Naive thymus-derived CD4-positive, alpha-beta T cell (primary cell): ENCODE measurements at regions of chr3 and their contacts with region 1.

Region 1: GRCh38 chr3:18679238-18679637 is 254.1 kb upstream of the SATB1 start:
- DNase-seq: peak in 8 of 9 donors; percentile 26 to 65 (median 42)
- ATAC-seq: peak; percentile 91
- H3K4me3 ChIP-seq: no peak overlapping the region
- H3K4me3 Mint-ChIP-seq: peak overlapping the region; percentile 30 to 79 (median 72)
- H3K27ac ChIP-seq: peak overlapping the region; percentile 35
- H3K27ac Mint-ChIP-seq: peak overlapping the region; percentile 53 to 90 (median 80)
- H3K4me1 ChIP-seq: peaks cover 34 to 46% of the 10 kb centered on the region in 2 donors
- H3K4me1 Mint-ChIP-seq: peaks cover 37 to 83% (median 75%) of the 10 kb centered on the region in 7 donors
- H3K27me3 ChIP-seq: no peaks in the 10 kb centered on the region
- H3K27me3 Mint-ChIP-seq: no peaks in the 10 kb centered on the region

Region 2: GRCh38 chr3:18643281-18643680 is 36.0 kb before region 1 on chr3:
- CTCF ChIA-PET with region 1: no interaction called
- POLR2A ChIA-PET with region 1: interaction called, 3 read pairs
- intact Hi-C with region 1: loop called in 1 of 2 experiments (anchors 2 kb)
- DNase-seq: peak in 4 of 9 donors; percentile 10 to 29 (median 14)
- ATAC-seq: no peak
- H3K4me3 ChIP-seq: no peak overlapping the region
- H3K4me3 Mint-ChIP-seq: peak overlapping the region in 9 of 10 donors; percentile 43 to 71 (median 58)
- H3K27ac ChIP-seq: no peak overlapping the region
- H3K27ac Mint-ChIP-seq: peak overlapping the region; percentile 45 to 90 (median 65)
- H3K4me1 ChIP-seq: peaks cover 18 to 24% of the 10 kb centered on the region in 2 donors
- H3K4me1 Mint-ChIP-seq: peaks cover 31 to 65% (median 50%) of the 10 kb centered on the region in 7 donors
- H3K27me3 ChIP-seq: no peaks in the 10 kb centered on the region
- H3K27me3 Mint-ChIP-seq: no peaks in the 10 kb centered on the region

Region 3: DNA sequence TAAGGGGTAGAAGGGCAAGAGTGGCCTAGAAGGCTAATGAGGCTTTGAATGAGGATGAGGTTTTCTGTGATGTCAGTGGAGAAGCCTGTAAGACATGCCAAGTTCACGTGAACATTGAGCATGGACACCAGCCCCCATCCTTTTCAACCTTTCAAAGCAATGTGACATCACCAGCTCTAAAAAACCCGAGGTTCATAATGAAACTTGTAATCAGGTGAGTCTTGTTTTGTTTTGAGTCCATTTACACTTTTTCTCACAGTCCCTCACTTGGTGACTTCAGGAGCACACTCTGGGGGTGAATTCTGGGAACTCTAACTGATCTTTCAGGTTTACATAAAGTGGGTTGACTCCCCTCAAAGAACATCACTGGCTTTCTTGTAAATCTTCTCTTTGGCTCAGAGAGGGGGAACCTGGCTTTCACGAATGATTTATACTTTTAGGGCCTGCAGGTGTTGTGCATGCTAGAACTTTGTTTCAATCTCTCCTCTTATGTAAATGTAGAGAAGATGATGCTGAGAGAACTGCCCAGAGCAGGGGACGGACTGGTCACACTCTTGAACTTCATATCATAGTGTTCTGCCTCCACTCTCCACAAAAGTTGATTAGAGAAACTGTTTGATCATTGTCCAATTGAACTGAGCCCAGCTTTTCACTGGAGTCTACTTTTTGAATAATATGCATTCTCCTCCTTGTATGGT is 29.4 kb before region 1 on chr3:
- CTCF ChIA-PET with region 1: no interaction called
- POLR2A ChIA-PET with region 1: no interaction called
- intact Hi-C with region 1: loop called in 1 of 2 experiments (anchors 1 kb)
- DNase-seq: peak in 8 of 9 donors; percentile 21 to 53 (median 33)
- ATAC-seq: peak; percentile 41
- H3K4me3 ChIP-seq: no peak overlapping the region
- H3K4me3 Mint-ChIP-seq: peak overlapping the region in 8 of 10 donors; percentile 14 to 66 (median 28)
- H3K27ac ChIP-seq: no peak overlapping the region
- H3K27ac Mint-ChIP-seq: peak overlapping the region; percentile 17 to 89 (median 56)
- H3K4me1 ChIP-seq: peaks cover 0 to 12% of the 10 kb centered on the region in 2 donors
- H3K4me1 Mint-ChIP-seq: peaks cover 22 to 77% (median 30%) of the 10 kb centered on the region in 7 donors
- H3K27me3 ChIP-seq: no peaks in the 10 kb centered on the region
- H3K27me3 Mint-ChIP-seq: no peaks in the 10 kb centered on the region

Region 4: GRCh38 chr3:18717598-18717997 is 38.4 kb after region 1 on chr3:
- CTCF ChIA-PET with region 1: interaction called, 4 read pairs
- POLR2A ChIA-PET with region 1: interaction called, 3 read pairs
- intact Hi-C with region 1: loop called (anchors 1 to 10 kb)
- DNase-seq: peak in 1 of 9 donors; percentile 14
- ATAC-seq: no peak
- H3K4me3 ChIP-seq: no peak overlapping the region
- H3K4me3 Mint-ChIP-seq: peak overlapping the region in 8 of 10 donors; percentile 28 to 78 (median 60)
- H3K27ac ChIP-seq: no peak overlapping the region
- H3K27ac Mint-ChIP-seq: peak overlapping the region; percentile 20 to 95 (median 77)
- H3K4me1 ChIP-seq: peaks cover 43 to 50% of the 10 kb centered on the region in 2 donors
- H3K4me1 Mint-ChIP-seq: peaks cover 50 to 85% (median 71%) of the 10 kb centered on the region in 7 donors
- H3K27me3 ChIP-seq: no peaks in the 10 kb centered on the region
- H3K27me3 Mint-ChIP-seq: no peaks in the 10 kb centered on the region

Region 5: DNA sequence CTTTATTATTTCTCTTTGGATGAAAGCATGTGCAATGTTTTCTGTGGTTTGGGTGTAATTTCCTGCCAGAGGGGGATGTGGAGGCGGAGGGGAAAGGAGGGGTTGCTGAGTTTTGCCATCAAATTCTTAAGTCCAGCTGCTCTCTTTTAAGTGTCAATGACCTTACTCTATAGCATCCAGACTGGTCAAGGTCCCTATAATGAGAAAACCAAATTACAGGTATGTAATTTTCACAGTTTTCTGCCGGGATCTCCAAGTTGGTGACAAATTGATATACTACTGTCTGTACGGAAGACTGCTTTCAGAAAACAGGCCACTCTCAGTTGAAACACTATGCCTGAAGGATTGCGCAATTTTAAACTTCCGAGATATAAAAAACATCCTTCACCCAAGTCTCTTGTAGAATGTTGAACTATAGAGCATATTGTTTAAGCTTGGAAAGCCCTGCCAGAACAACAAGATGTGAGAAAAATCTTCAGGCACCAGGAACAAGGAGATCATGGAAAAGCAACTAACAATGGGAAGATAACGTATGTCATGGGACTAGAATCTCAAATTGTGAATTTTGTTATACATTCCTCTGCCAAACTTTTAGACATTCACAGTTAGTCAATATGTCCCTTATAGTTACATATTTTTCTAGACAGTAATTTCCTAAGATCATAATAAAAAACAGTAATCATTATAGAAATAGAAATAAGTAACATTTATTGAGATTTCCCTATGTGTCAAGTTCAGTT is 46.6 kb after region 1 on chr3:
- CTCF ChIA-PET with region 1: no interaction called
- POLR2A ChIA-PET with region 1: no interaction called
- intact Hi-C with region 1: loop called in 1 of 2 experiments (anchors 10 kb)
- DNase-seq: peak in 8 of 9 donors; percentile 50 to 76 (median 68)
- ATAC-seq: peak; percentile 80
- H3K4me3 ChIP-seq: peak overlapping the region; percentile 42
- H3K4me3 Mint-ChIP-seq: peak overlapping the region; percentile 57 to 88 (median 75)
- H3K27ac ChIP-seq: peak overlapping the region; percentile 74
- H3K27ac Mint-ChIP-seq: peak overlapping the region; percentile 95 to 100 (median 98)
- H3K4me1 ChIP-seq: peaks cover 54 to 61% of the 10 kb centered on the region in 2 donors
- H3K4me1 Mint-ChIP-seq: peaks cover 50 to 88% (median 80%) of the 10 kb centered on the region in 7 donors
- H3K27me3 ChIP-seq: no peaks in the 10 kb centered on the region
- H3K27me3 Mint-ChIP-seq: no peaks in the 10 kb centered on the region

Region 6: DNA sequence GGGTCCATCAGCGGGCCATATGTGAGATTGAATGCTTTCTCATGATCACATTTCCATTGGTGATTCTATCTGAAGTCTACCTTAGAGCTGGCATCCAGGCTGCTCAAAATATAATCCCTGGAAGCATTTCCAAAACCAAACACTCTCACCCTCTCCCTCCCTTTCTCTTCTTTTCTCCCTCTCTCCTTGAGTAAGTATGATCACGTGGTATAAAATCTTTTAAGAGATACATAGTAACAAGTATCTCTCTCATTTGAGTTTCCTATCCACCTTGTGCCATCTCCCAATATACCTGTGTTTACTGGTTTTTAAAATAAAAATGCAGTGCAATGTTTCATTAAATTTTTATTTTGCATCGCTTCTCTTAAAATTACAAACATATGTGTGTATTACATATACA is 118.1 kb after region 1 on chr3:
- CTCF ChIA-PET with region 1: no interaction called
- POLR2A ChIA-PET with region 1: no interaction called
- intact Hi-C with region 1: no loop called
- DNase-seq: no peak
- ATAC-seq: no peak
- H3K4me3 ChIP-seq: no peak overlapping the region
- H3K4me3 Mint-ChIP-seq: no peak overlapping the region
- H3K27ac ChIP-seq: no peak overlapping the region
- H3K27ac Mint-ChIP-seq: no peak overlapping the region
- H3K4me1 ChIP-seq: no peaks in the 10 kb centered on the region
- H3K4me1 Mint-ChIP-seq: peaks cover 0 to 14% (median 0%) of the 10 kb centered on the region in 7 donors
- H3K27me3 ChIP-seq: no peaks in the 10 kb centered on the region
- H3K27me3 Mint-ChIP-seq: peaks cover 0 to 3% (median 0%) of the 10 kb centered on the region in 5 donors